A549 (cell line): ENCODE measurements at regions of chr11 and their contacts with region 1.

Region 1: DNA sequence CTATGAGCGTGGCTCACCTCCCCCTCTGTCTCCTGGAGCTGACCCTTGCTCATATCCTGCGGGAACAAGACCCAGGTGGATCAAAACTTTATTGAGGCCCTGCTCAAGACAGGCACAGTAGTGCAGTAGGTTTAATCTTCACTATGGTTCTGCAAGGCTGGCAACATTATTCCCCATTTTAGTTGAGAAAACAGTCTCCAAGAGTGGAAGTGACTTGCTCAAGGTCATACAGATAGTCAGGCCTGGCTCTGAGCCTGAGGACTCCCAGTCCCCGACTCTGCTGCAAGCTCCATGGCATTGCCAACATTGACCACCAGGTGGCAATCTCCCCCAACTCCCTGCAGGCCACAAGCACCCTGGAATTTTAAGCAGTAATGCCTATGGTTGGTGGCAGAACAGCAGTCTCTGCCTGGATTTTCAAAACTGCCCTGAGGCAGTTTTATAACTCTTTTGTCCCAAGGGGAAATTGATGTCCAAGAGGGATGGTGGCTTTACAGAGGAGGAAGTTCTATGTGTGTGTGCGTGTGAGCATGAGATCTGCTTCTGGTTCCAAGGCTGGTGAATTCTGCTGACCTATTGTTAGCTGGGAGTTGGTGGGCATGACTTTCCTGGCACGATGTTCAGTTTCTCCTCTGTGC is 34.1 kb downstream of the NEU3 start:
- DNase-seq: peak; percentile 81 to 86
- ATAC-seq: peak; percentile 96 to 99
- H3K4me3 ChIP-seq: no peak overlapping the region
- H3K27ac ChIP-seq: no peak overlapping the region
- H3K4me1 ChIP-seq: no peaks in the 10 kb centered on the region
- CTCF ChIP-seq: peak; percentile 95
- EP300 ChIP-seq: no peak
- POLR2A ChIP-seq: no peak
- RAD21 ChIP-seq: peak; percentile 91 to 98

Region 2: DNA sequence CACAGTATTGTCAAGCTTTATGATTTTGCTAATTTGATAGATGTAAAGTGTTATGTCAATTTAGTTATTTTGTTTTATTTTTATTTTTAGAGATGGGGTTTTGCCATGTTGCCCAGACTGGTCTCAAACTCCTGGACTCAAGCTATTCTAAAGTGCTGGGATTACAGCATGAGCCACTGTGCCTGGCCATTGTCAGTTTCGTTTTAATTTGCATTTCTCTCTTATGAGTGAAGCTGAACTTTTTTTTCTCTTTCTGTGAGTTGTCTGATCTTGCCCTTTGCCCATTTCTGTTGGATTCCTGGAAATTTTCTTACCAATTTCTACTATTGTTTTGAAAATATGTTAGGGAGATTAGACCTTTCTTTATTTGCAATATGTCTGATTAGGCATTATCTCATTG is 18.7 kb before region 1 on chr11:
- CTCF ChIA-PET with region 1: interaction called, 26 read pairs
- POLR2A ChIA-PET with region 1: no interaction called
- DNase-seq: no peak
- ATAC-seq: no peak
- H3K4me3 ChIP-seq: no peak overlapping the region
- H3K27ac ChIP-seq: no peak overlapping the region
- H3K4me1 ChIP-seq: no peaks in the 10 kb centered on the region
- CTCF ChIP-seq: no peak
- EP300 ChIP-seq: no peak
- POLR2A ChIP-seq: no peak
- RAD21 ChIP-seq: no peak

Region 3: DNA sequence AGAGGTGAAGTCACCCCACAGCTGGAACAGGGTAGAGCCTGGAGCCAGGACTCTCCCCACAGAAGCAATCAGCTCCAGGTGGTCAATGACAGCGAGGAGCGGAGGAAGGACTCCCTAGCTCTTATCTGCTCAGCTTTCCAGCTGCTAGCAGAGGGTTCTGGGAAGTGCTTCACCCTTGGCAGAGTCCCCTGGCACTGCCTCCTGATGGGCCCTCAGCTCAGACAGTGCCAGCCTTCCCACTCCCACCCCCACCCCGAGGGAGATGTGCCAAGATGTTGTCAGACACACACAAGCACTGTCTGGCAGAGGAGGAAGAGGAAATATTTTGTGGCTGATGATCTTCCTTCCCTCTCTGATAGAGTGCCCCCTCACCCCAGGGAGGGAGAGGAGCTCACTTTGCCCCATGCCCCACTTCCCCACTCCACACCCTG is 172.3 kb after region 1 on chr11:
- CTCF ChIA-PET with region 1: interaction called, 177 read pairs
- POLR2A ChIA-PET with region 1: no interaction called
- DNase-seq: no peak
- ATAC-seq: peak in 1 of 2 experiments; percentile 34; a peak in 3 of 6 replicates
- H3K4me3 ChIP-seq: no peak overlapping the region
- H3K27ac ChIP-seq: peak overlapping the region in 1 of 2 experiments; percentile 55; a peak in 2 of 6 replicates
- H3K4me1 ChIP-seq: peaks cover 19% of the 10 kb centered on the region; the same call in 2 of the 3 replicates
- CTCF ChIP-seq: no peak
- EP300 ChIP-seq: no peak
- POLR2A ChIP-seq: no peak
- RAD21 ChIP-seq: no peak

Region 4: DNA sequence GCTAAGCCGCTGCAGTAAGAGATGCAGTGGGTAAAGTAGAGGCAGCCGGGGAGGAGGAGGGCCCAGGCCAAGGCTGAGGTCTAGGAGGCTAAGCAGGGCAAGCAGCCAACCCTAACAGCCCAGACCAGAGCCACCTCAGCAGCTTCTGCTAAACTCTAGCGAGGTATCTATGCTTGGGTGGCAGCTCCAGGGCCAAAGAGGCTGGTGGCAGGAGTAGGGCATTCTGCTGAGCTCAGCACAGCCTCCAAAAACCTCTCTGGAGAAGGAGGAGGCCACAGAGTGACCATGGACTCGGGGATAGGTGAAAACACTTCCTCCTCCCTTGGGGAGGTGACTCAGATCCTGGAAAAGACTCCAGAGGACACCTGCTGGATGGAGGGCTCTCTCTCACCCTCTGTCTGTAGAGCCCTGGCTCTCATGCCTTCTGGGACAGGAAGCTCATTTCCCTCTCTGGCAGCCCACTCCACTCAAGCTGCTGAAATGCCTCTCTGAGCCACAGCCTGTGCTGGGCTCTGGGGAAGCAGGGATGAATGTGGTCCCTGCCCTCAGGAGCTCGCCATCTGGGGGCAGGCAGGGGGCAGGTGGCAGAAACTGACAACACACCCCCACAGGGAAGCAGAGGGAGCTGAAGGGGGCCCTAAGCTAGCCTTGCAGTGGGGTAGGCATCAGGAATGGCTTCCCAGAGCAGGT is 201.2 kb after region 1 on chr11:
- CTCF ChIA-PET with region 1: interaction called, 10 read pairs
- POLR2A ChIA-PET with region 1: no interaction called
- DNase-seq: peak; percentile 21 to 29
- ATAC-seq: peak; percentile 92 to 95
- H3K4me3 ChIP-seq: no peak overlapping the region
- H3K27ac ChIP-seq: no peak overlapping the region
- H3K4me1 ChIP-seq: no peaks in the 10 kb centered on the region
- CTCF ChIP-seq: no peak
- EP300 ChIP-seq: no peak
- POLR2A ChIP-seq: no peak
- RAD21 ChIP-seq: no peak

Region 5: DNA sequence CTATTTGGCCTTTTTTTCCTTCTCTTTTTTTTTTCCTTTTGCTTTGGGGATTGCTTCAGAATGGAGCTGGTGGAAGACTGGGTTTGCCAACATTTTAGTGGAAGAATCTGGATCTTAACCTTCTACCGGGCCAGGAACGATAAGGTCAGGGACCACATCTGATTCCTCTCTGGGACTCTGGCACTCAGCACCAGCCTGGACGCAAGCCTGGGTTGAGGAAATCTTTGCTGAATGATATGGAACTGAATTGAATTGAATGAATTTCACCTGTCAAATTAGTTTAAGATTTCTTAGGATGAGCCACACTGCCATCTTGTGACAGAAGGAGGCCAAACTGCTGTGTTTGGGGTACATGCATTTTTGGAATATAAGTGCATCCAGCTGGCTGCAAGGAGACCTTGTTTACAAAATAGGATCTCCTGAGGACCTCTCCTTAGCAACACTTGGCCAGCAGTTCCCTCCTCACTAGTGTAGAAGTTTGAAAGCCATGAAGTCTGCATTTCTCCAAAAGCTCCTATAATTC is 248.1 kb after region 1 on chr11:
- CTCF ChIA-PET with region 1: interaction called, 26 read pairs
- POLR2A ChIA-PET with region 1: no interaction called
- DNase-seq: peak; percentile 37 to 47
- ATAC-seq: peak; percentile 49 to 63; a peak in 3 of 6 replicates
- H3K4me3 ChIP-seq: no peak overlapping the region
- H3K27ac ChIP-seq: no peak overlapping the region
- H3K4me1 ChIP-seq: no peaks in the 10 kb centered on the region
- CTCF ChIP-seq: peak; percentile 56
- EP300 ChIP-seq: no peak
- POLR2A ChIP-seq: no peak
- RAD21 ChIP-seq: peak; percentile 53 to 56; a peak in 4 of 5 replicates